GM12878 (cell line): ENCODE measurements at regions of chr21 and their contacts with region 1.

Region 1: GRCh38 chr21:34603002-34603709 is 11.8 kb downstream of the RCAN1 start:
- DNase-seq: no peak
- ATAC-seq: peak; percentile 100
- H3K4me3 ChIP-seq: no peak overlapping the region
- H3K27ac ChIP-seq: no peak overlapping the region
- H3K4me1 ChIP-seq: no peaks in the 10 kb centered on the region
- H3K27me3 ChIP-seq: no peaks in the 10 kb centered on the region
- CTCF ChIP-seq: peak; percentile 81 to 85 (median 83)
- EP300 ChIP-seq: no peak
- POLR2A ChIP-seq: no peak
- RAD21 ChIP-seq: peak; percentile 99

Region 2: DNA sequence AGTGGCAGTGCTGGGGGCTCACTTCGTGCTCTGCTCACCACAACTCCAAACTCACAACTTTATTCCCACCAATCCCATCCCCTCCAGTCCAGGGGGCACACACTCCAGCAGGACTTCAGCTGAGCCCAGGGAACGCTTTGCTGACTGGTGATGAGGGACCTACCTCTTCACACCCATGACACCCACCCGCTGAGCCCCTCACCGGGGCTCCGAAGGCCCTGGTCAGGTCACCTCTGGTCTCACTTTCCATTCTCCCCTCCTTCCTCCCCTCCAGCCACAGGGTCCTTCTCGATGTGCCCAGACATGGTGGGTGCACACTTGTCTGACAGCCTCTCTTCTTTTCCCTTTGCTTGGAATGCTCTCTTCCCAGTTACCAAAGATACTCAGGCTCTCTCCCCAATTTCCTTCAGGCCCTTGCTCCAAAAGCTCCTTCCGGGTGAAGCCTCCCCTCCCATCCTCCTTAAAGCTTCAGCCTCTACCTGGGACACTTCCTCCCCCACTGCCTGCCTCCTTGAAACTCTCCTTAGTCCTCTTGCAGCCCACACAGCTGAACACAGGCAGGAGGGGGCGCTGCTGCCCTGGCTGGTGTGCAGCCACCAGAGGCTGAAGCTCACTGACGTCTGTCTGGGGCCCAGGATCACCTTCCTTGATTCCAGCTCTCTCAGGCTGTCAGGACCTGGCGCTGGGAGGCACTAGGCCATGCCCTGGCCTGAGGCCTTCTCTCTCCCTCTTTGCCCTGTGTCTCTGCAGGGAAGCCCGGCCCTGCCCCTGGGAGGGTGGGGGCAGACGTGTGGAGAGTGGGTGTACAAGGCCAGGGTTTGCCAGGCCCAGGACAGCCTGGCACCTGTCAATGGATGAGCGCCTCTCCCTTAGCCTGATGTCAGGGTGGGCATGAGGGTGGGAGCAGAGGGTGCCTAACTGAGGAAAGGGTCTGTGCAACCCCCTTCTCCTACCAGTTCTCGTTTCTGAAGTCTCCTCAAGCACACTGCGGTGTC is 92.7 kb before region 1 on chr21:
- CTCF ChIA-PET with region 1: interaction called, 216 read pairs
- POLR2A ChIA-PET with region 1: no interaction called
- RAD21 ChIA-PET with region 1: interaction called, 71 read pairs
- SMC1A ChIA-PET with region 1: interaction called, 47 read pairs
- in situ Hi-C with region 1: no loop called
- intact Hi-C with region 1: loop called (anchors 1 kb)
- DNase-seq: no peak
- ATAC-seq: peak; percentile 99
- H3K4me3 ChIP-seq: no peak overlapping the region
- H3K27ac ChIP-seq: no peak overlapping the region
- H3K4me1 ChIP-seq: no peaks in the 10 kb centered on the region
- H3K27me3 ChIP-seq: no peaks in the 10 kb centered on the region
- CTCF ChIP-seq: peak; percentile 81 to 86 (median 86)
- EP300 ChIP-seq: no peak
- POLR2A ChIP-seq: no peak
- RAD21 ChIP-seq: peak; percentile 98

Region 3: GRCh38 chr21:34582506-34583150 is 20.5 kb before region 1 on chr21:
- CTCF ChIA-PET with region 1: interaction called, 23 read pairs
- POLR2A ChIA-PET with region 1: no interaction called
- RAD21 ChIA-PET with region 1: interaction called, 16 read pairs
- SMC1A ChIA-PET with region 1: interaction called, 4 read pairs
- in situ Hi-C with region 1: no loop called
- intact Hi-C with region 1: no loop called
- DNase-seq: no peak
- ATAC-seq: peak; percentile 95
- H3K4me3 ChIP-seq: no peak overlapping the region
- H3K27ac ChIP-seq: no peak overlapping the region
- H3K4me1 ChIP-seq: peaks cover 14% of the 10 kb centered on the region; the same call in 1 of the 2 replicates
- H3K27me3 ChIP-seq: no peaks in the 10 kb centered on the region
- CTCF ChIP-seq: peak; percentile 45 to 55 (median 48); a peak in 5 of 6 replicates
- EP300 ChIP-seq: no peak
- POLR2A ChIP-seq: no peak
- RAD21 ChIP-seq: peak; percentile 71

Region 4: GRCh38 chr21:34614633-34615486 is 11.7 kb after region 1 on chr21 and contains the start of gene RCAN1:
- CTCF ChIA-PET with region 1: interaction called, 28 read pairs
- POLR2A ChIA-PET with region 1: no interaction called
- RAD21 ChIA-PET with region 1: interaction called, 11 read pairs
- SMC1A ChIA-PET with region 1: interaction called, 6 read pairs
- in situ Hi-C with region 1: no loop called
- intact Hi-C with region 1: no loop called
- DNase-seq: peak; percentile 75
- ATAC-seq: peak; percentile 98
- H3K4me3 ChIP-seq: peak within 1 kb of the TSS; percentile 81
- H3K27ac ChIP-seq: no peak within 1 kb of the TSS
- H3K4me1 ChIP-seq: peaks cover 6% of the 10 kb centered on the region
- H3K27me3 ChIP-seq: no peaks in the 10 kb centered on the region
- CTCF ChIP-seq: no peak
- EP300 ChIP-seq: no peak
- POLR2A ChIP-seq: 0 out of 2 replicates have a peak, but pooled peaks have one; percentile 1
- RAD21 ChIP-seq: no peak
- polyA plus RNA-seq, gene RCAN1: 5.1 to 8.8 TPM

Region 5: GRCh38 chr21:34697826-34698225 is 94.7 kb after region 1 on chr21:
- CTCF ChIA-PET with region 1: no interaction called
- POLR2A ChIA-PET with region 1: no interaction called
- RAD21 ChIA-PET with region 1: no interaction called
- SMC1A ChIA-PET with region 1: no interaction called
- in situ Hi-C with region 1: no loop called
- intact Hi-C with region 1: no loop called
- DNase-seq: no peak
- ATAC-seq: no peak
- H3K4me3 ChIP-seq: no peak overlapping the region
- H3K27ac ChIP-seq: no peak overlapping the region
- H3K4me1 ChIP-seq: peaks cover 42% of the 10 kb centered on the region
- H3K27me3 ChIP-seq: no peaks in the 10 kb centered on the region
- CTCF ChIP-seq: no peak
- EP300 ChIP-seq: no peak
- POLR2A ChIP-seq: no peak
- RAD21 ChIP-seq: no peak

Region 6: DNA sequence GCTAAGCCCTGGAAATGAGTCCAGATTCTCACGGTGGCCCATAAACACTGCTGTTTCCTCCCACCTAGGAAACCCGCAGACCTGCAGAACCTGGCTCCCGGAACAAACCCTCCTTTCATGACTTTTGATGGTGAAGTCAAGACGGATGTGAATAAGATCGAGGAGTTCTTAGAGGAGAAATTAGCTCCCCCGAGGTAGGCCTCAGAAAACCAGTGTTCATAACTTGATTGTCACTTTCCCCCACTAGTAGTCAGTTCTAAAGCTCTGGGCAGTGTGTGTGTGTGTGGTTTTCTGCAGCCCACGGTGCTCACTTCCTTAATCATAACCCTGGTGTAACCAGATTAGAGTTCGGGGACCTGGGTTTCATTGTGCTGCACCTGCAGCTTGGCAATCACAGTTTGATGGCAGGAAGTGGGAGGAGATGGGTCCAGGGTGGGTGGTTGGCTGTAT is 104.7 kb after region 1 on chr21:
- CTCF ChIA-PET with region 1: no interaction called
- POLR2A ChIA-PET with region 1: no interaction called
- RAD21 ChIA-PET with region 1: no interaction called
- SMC1A ChIA-PET with region 1: no interaction called
- in situ Hi-C with region 1: no loop called
- intact Hi-C with region 1: no loop called
- DNase-seq: peak; percentile 66
- ATAC-seq: peak; percentile 95
- H3K4me3 ChIP-seq: no peak overlapping the region
- H3K27ac ChIP-seq: peak overlapping the region; percentile 82
- H3K4me1 ChIP-seq: peaks cover 25% of the 10 kb centered on the region
- H3K27me3 ChIP-seq: no peaks in the 10 kb centered on the region
- CTCF ChIP-seq: no peak
- EP300 ChIP-seq: peak; percentile 35 to 55; a peak in 2 of 4 replicates
- POLR2A ChIP-seq: no peak
- RAD21 ChIP-seq: no peak